Mammary epithelial cell (primary cell): ENCODE measurements at regions of chr15 and their contacts with region 1.

Region 1: GRCh38 chr15:71471347-71471746 is 339.0 kb upstream of the NR2E3 start:
- DNase-seq: peak; percentile 91
- H3K4me3 ChIP-seq: no peak overlapping the region
- H3K27ac ChIP-seq: peak overlapping the region; percentile 85
- H3K4me1 ChIP-seq: peaks cover 19% of the 10 kb centered on the region
- H3K27me3 ChIP-seq: no peaks in the 10 kb centered on the region
- CTCF ChIP-seq: no peak

Region 2: DNA sequence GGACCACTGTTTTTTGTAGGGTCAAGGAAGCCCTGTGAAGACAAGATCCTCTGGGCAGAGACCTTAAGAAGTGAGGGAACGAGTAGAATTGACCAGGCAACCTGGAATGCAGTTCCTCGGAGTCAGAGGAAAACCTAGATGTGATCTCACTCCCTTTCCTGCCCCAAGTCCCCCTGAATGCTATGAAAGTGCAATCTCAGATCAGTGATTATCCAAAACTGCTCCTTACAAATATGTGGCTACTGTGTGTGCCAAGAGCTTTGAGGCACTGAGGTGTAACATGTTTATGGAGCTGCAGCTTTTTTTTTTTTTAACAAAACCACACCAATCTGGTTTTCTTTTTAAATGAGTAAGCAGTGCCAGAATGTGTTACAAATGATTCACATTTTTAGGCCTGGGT is 320.3 kb before region 1 on chr15:
- CTCF ChIA-PET with region 1: no interaction called
- dilution Hi-C with region 1: no loop called
- in situ Hi-C with region 1: no loop called
- intact Hi-C with region 1: no loop called
- DNase-seq: peak; percentile 74
- H3K4me3 ChIP-seq: no peak overlapping the region
- H3K27ac ChIP-seq: peak overlapping the region; percentile 29
- H3K4me1 ChIP-seq: peaks cover 36% of the 10 kb centered on the region
- H3K27me3 ChIP-seq: no peaks in the 10 kb centered on the region
- CTCF ChIP-seq: no peak

Region 3: DNA sequence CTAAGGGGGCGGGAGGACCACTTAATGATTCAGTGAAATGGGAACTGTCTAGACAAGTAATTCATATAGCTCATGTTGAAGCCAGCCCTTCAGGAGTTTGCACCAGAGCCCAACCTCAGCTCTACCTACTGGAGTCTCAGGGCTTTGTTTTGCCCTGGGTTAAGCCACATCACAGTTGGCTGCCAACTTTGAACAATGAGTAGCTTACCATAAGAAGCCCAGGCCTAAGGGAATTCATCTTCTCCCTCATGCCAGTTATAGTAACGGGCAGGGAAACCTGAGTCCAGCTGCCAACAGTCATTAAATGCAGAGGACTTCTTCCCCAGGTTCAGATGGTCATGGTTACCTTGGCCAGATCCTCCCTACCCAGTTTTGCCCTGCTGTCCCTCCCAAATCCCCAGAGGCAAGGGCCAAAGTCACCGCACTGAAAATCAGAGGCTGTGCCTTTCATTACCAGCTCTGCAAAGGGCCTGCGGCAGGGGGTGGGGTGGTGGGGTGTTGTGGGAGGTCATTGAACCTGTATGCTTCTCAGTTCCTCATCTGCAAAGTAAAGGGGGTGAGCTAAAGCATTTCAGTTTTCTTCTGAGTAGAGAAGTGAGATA is 36.8 kb after region 1 on chr15:
- CTCF ChIA-PET with region 1: no interaction called
- dilution Hi-C with region 1: loop called (anchors 5 kb)
- in situ Hi-C with region 1: no loop called
- intact Hi-C with region 1: no loop called
- DNase-seq: peak; percentile 81
- H3K4me3 ChIP-seq: no peak overlapping the region
- H3K27ac ChIP-seq: peak overlapping the region; percentile 36
- H3K4me1 ChIP-seq: peaks cover 15% of the 10 kb centered on the region
- H3K27me3 ChIP-seq: no peaks in the 10 kb centered on the region
- CTCF ChIP-seq: no peak

Region 4: GRCh38 chr15:71691458-71692417 is 220.4 kb after region 1 on chr15:
- CTCF ChIA-PET with region 1: no interaction called
- dilution Hi-C with region 1: no loop called
- in situ Hi-C with region 1: no loop called
- intact Hi-C with region 1: no loop called
- DNase-seq: peak; percentile 83
- H3K4me3 ChIP-seq: peak overlapping the region in 2 of 3 experiments; percentile 2 to 22
- H3K27ac ChIP-seq: peak overlapping the region; percentile 81
- H3K4me1 ChIP-seq: peaks cover 19% of the 10 kb centered on the region
- H3K27me3 ChIP-seq: no peaks in the 10 kb centered on the region
- CTCF ChIP-seq: no peak